Vagina (tissue), 2 donors: ENCODE measurements at regions of chr5 and their contacts with region 1.

Region 1: DNA sequence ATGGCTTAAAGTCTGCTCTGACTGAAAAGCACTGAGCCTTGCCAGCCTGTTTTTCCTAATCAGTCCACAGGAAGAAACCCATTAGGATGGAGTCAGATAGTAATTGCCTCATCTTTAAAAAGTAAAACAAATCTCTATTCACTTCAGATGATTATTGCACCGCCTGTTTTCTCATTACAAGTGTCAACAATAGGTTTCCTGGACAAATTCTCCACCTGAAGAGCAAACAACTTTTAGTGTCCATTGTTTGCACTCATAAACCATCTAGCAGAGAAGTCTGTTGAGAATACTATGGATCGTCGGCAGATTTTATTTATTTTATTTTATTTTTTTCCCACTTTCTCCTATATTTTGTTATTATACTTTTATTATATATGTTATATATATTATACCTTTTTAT is 20.3 kb downstream of the C5orf63 start:
- DNase-seq: no peak
- H3K4me3 ChIP-seq: no peak overlapping the region
- H3K27ac ChIP-seq: no peak overlapping the region
- H3K4me1 ChIP-seq: no peaks in the 10 kb centered on the region
- H3K27me3 ChIP-seq: no peaks in the 10 kb centered on the region
- CTCF ChIP-seq: no peak
- POLR2A ChIP-seq: no peak

Region 2: DNA sequence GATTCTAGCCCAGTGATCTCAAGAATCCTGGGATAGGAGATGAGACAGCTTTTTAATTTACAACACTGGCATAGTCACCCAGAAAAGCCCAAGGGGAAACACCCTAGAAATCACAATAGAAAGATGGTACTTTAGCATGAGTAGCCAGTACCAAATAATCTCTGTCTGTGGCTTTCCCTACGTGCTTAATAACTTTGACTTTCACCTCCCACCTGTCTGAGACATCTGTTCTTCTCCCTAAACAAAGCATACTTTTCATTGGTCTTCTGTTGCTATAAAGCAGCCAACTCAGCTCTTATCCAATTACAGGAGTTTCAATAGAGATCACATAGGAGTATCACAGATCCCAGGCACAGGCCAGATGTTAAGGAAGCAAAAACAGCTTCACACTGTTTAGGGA is 33.1 kb before region 1 on chr5:
- intact Hi-C with region 1: loop called (anchors 5 kb)
- DNase-seq: no peak
- H3K4me3 ChIP-seq: no peak overlapping the region
- H3K27ac ChIP-seq: no peak overlapping the region
- H3K4me1 ChIP-seq: no peaks in the 10 kb centered on the region
- H3K27me3 ChIP-seq: no peaks in the 10 kb centered on the region
- CTCF ChIP-seq: no peak
- POLR2A ChIP-seq: no peak

Region 3: DNA sequence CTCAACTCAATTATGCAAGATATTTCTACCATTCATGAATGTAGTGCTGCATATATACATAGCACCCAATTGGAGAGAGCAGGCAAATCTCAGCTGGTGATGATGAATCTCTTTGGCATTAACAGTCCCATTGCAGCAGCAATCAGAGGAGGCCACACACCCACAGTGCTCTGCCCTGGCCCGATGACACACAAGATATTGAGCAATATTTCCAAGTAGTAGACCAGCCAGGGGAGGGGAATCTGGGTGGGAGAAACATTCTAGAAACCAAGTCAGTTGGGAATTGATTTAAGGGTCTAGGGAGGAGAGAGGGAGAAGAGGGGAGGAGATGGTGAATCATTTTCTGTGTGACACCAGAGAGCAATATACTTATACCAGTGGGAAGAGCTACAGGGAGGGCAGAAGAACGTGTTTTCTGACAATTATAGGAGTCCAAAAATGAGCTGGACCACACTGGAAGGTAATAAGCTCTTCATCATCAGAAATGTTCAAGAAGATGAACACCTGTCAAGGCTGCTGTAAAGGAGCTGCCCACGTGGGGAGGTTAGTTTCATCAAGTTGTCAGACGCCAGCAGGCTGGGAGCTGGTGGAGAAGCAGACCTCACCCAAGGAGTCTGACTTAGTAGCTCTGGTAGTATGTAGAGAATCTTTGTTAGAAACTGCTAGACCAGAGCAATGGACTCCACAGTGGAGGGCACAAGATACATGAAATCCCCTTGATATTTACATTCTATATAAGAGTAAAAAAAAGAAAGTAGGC is 35.4 kb after region 1 on chr5:
- intact Hi-C with region 1: no loop called
- DNase-seq: no peak
- H3K4me3 ChIP-seq: no peak overlapping the region
- H3K27ac ChIP-seq: no peak overlapping the region
- H3K4me1 ChIP-seq: no peaks in the 10 kb centered on the region
- H3K27me3 ChIP-seq: no peaks in the 10 kb centered on the region
- CTCF ChIP-seq: no peak
- POLR2A ChIP-seq: no peak